Activated CD4-positive, alpha-beta T cell treated with anti-CD3 and anti-CD28 coated beads, Interleukin-2, amount 10 ng/mL, durations not matched to agents 7 days and 5 days (primary cell): ENCODE measurements at regions of chr19 and their contacts with region 1.

Region 1: GRCh38 chr19:12913011-12913561 is 6.0 kb downstream of the SYCE2 start:
- DNase-seq: no peak
- H3K4me3 Mint-ChIP-seq: no peak overlapping the region
- H3K27ac Mint-ChIP-seq: peak overlapping the region; percentile 98
- H3K4me1 Mint-ChIP-seq: peaks cover 25% of the 10 kb centered on the region
- H3K27me3 Mint-ChIP-seq: no peaks in the 10 kb centered on the region

Region 2: DNA sequence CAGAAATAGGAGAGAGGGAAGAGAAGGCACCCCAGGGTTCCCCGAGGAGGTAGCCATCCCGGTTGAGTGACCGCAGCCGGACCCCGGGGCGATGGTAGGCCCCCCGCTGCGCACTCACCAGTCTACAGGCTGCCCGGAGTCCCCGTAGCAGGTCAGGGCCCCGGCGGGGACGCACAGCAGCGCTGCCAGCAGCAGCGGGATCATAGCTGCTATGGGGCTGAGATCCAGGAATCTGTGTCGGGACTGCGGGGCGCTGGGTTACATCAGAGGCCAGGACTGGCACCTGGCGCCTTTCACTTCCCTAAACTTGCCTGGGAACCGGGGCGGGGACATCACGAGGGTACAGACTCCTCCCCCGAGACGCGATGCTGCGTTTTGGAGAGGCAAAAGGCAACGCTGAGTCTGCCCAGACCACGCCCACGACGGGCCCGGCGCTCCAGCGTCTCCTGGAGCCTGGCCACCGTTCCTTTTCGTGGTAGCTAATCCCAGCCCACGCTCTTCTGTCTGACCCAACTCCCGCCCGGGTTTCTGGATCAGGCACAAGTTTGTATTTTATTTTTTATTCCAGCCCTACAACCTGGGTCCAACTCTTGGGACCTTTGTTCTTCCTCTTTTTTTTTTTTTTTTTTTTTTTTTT is 31.8 kb before region 1 on chr19 and contains the start of gene DNASE2:
- CTCF ChIA-PET with region 1: interaction called, 16 read pairs
- POLR2A ChIA-PET with region 1: interaction called, 3 read pairs
- DNase-seq: peak; percentile 95
- H3K4me3 Mint-ChIP-seq: peak within 1 kb of the TSS; percentile 79
- H3K27ac Mint-ChIP-seq: peak within 1 kb of the TSS; percentile 90
- H3K4me1 Mint-ChIP-seq: peaks cover 33% of the 10 kb centered on the region
- H3K27me3 Mint-ChIP-seq: peaks cover 1% of the 10 kb centered on the region
- total RNA-seq, gene DNASE2: 28.8 to 30.0 TPM

Region 3: DNA sequence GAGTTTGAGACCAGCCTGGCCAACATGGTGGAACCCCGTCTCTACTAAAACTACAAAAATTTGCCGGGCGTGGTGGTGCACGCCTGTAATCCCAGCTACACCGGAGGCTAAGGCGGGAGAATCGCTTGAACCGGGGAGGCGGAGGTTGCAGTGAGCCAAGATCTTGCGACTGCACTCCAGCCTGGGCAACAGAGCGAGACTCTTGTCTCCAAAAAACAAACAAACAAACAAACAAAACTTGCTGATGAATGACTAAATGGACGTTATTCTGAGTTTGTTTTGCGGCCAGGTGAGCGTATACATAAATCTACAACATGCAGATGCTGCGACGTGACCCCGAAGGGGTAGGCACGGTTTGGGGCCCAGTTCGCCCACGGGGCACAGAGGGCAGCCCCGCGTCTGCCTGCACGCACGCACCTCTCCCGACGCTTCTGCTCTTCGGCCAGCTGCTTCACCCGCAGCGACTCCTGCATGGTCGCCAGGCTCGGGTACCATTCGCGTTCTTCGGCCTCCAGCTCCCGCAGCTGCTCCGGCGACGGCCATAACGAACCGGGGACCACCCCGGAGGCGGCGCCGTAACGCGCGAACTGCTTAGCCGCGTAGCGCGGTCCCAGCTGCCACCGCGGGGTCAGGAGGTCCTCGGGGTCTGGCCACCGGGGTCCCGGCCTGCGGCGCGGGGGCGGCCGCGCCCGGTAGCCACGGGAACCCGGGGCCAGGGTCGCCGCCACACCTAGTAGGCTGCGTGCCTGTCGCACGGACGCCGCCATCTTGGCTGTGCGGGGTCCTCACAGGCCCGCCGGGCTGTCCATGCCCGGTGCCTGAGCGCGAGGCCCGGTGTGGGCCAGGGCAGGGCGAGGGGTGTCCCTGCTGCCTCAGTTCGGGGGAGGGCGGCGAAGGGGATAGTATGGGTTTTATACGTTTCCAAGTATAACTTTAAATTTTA is 43.6 kb after region 1 on chr19 and contains the start of gene GADD45GIP1:
- CTCF ChIA-PET with region 1: no interaction called
- POLR2A ChIA-PET with region 1: no interaction called
- DNase-seq: peak; percentile 84
- H3K4me3 Mint-ChIP-seq: peak within 1 kb of the TSS; percentile 87
- H3K27ac Mint-ChIP-seq: peak within 1 kb of the TSS; percentile 98
- H3K4me1 Mint-ChIP-seq: peaks cover 32% of the 10 kb centered on the region
- H3K27me3 Mint-ChIP-seq: no peaks in the 10 kb centered on the region
- total RNA-seq, gene GADD45GIP1: 14.9 to 16.5 TPM